OCI-LY7 (cell line): ENCODE measurements at regions of chr6 and their contacts with region 1.

Region 1: GRCh38 chr6:1792989-1793388 is 183.3 kb downstream of the FOXC1 start:
- DNase-seq: peak; percentile 48
- H3K4me3 ChIP-seq: no peak overlapping the region
- H3K27ac ChIP-seq: no peak overlapping the region
- H3K4me1 ChIP-seq: peaks cover 13% of the 10 kb centered on the region
- CTCF ChIP-seq: peak; percentile 80

Region 2: DNA sequence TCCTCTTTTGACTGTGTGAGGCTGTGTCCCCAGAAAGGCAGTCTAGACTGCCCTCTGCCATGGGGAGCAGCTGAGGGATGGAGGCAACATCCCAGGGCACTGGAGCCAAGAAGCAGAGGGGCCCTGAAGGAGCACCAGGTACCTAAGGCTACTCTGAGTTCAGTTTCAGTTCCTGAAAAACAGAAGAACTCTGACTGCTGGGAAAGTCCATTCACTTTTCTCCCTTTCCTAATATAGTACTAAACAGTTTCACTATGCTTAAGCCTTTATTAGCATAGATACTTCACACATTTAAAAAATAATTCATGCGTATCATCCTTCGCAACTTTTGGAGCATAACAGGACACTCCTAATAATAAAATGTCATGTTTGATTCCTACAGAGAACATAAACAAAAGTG is 53.3 kb before region 1 on chr6:
- CTCF ChIA-PET with region 1: no interaction called
- POLR2A ChIA-PET with region 1: no interaction called
- intact Hi-C with region 1: loop called (anchors 1 kb)
- DNase-seq: peak; percentile 84
- H3K4me3 ChIP-seq: peak overlapping the region; percentile 40
- H3K27ac ChIP-seq: peak overlapping the region; percentile 48
- H3K4me1 ChIP-seq: peaks cover 61% of the 10 kb centered on the region
- CTCF ChIP-seq: no peak

Region 3: GRCh38 chr6:1809291-1809988 is 16.5 kb after region 1 on chr6:
- CTCF ChIA-PET with region 1: no interaction called
- POLR2A ChIA-PET with region 1: interaction called, 15 read pairs
- intact Hi-C with region 1: no loop called
- DNase-seq: no peak
- H3K4me3 ChIP-seq: no peak overlapping the region
- H3K27ac ChIP-seq: no peak overlapping the region
- H3K4me1 ChIP-seq: no peaks in the 10 kb centered on the region
- CTCF ChIP-seq: no peak

Region 4: GRCh38 chr6:2103644-2104523 is 310.9 kb after region 1 on chr6:
- CTCF ChIA-PET with region 1: no interaction called
- POLR2A ChIA-PET with region 1: no interaction called
- intact Hi-C with region 1: loop called (anchors 10 kb)
- DNase-seq: peak; percentile 38
- H3K4me3 ChIP-seq: no peak overlapping the region
- H3K27ac ChIP-seq: no peak overlapping the region
- H3K4me1 ChIP-seq: no peaks in the 10 kb centered on the region
- CTCF ChIP-seq: peak; percentile 81